WTC11 (cell line): ENCODE measurements at regions of chr7 and their contacts with region 1.

Region 1: DNA sequence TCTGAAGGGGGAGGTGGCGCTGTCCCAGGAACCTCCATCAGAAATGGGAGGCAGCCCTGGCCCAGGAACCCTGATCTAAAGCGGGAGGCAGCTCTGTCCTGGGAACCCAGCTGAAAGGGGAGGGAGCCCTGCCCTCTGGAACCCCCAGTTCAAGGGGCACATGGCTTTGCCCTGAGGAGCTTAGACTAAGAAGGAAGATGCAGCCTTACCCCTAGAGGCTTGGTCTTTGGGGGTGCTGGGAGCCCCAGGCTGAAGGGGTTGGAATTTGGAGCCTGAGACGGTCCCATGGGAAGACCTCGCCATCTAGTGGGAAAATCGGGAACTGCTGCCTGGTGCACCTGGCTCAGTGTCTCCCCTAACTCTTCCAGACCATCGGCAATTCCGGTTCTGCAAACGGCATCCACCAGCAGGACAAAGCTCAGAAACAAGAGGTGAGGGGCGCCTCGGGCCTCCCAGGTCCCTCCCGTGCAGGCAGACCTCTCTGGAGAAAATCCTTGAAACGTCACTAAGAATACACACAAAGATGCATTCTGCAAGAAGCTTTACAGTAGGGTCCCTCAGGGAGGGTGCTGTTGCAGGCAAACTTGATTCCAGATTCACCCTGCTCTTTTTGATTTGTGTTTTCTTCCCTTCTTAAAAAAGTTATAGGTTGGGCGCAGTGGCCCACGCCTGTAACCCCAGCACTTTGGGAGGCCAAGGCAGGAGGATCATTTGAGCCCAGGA is 52.4 kb upstream of the GTF2IRD1 start:
- DNase-seq: peak; percentile 93
- ATAC-seq: peak; percentile 63
- H3K4me3 Mint-ChIP-seq: no peak overlapping the region
- H3K27ac Mint-ChIP-seq: no peak overlapping the region
- H3K4me1 Mint-ChIP-seq: peaks cover 5% of the 10 kb centered on the region; the same call in 1 of the 2 replicates
- H3K27me3 Mint-ChIP-seq: no peaks in the 10 kb centered on the region; the same call in 1 of the 2 replicates
- CTCF ChIP-seq: peak; percentile 97

Region 2: DNA sequence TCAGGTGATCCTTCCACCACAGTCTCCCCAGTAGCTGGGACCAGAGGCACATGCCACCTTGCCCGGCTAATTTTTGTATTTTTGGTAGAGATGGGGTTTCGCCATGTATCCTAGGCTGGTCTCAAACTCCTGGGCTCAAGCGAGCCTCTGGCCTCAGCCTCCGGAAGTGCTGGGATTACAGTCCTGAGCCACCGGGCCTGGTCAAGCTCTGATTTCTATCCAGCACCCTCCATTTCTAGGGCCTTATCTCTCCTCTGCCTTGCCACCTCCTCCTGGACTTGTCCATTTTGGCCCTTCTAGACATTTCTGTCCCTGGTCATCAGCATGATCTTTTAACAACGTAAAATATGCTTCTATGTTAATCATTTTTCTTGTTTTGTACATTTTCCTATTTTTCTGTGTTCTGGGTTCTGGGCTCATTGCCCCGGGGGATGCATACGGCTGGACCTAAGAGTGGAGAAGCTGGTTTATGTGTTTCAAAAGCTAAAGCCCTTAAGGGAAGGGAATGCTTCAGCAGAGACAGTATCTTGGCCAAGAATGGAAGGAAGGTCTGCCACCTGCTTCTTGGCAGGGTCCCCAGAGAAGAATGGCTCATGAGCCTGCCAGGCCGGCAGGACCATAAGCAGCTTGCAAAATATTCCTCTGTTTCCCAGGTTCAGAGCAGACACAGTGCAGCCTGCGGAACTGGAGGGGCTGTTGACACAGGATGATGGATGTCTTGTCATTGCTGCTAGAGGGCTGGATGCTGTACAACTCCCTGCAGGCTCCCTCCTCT is 655.1 kb before region 1 on chr7:
- CTCF ChIA-PET with region 1: no interaction called
- POLR2A ChIA-PET with region 1: no interaction called
- DNase-seq: no peak
- ATAC-seq: no peak
- H3K4me3 Mint-ChIP-seq: no peak overlapping the region
- H3K27ac Mint-ChIP-seq: peak overlapping the region; percentile 42; the same call in 1 of the 2 replicates
- H3K4me1 Mint-ChIP-seq: peaks cover 33% of the 10 kb centered on the region
- H3K27me3 Mint-ChIP-seq: peaks cover 16% of the 10 kb centered on the region
- CTCF ChIP-seq: no peak

Region 3: DNA sequence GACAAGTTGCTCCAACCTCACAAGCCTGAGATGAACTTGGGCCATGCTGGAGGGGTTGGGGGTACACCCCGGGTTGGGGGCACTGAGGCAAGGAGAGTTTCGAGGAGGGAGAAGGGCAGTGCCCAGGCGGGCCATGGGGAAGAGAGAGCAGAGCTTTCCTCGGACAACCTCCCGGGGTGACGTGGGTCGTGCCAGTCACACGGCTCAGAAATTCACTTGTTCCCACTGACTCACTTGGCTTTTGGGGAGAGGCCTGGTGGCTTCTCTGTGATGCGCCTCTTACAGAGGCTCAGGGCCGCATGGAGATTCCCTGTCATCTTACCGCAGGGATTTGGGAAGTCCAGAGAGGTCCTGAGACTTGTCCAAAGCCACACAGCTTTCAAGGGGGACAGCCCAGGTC is 188.6 kb before region 1 on chr7:
- CTCF ChIA-PET with region 1: interaction called, 275 read pairs
- POLR2A ChIA-PET with region 1: no interaction called
- DNase-seq: no peak
- ATAC-seq: no peak
- H3K4me3 Mint-ChIP-seq: no peak overlapping the region
- H3K27ac Mint-ChIP-seq: no peak overlapping the region
- H3K4me1 Mint-ChIP-seq: no peaks in the 10 kb centered on the region
- H3K27me3 Mint-ChIP-seq: no peaks in the 10 kb centered on the region; the same call in 1 of the 2 replicates
- CTCF ChIP-seq: no peak

Region 4: GRCh38 chr7:74226633-74227032 is 174.7 kb before region 1 on chr7:
- CTCF ChIA-PET with region 1: interaction called, 31 read pairs
- POLR2A ChIA-PET with region 1: interaction called, 6 read pairs
- DNase-seq: no peak
- ATAC-seq: no peak
- H3K4me3 Mint-ChIP-seq: no peak overlapping the region
- H3K27ac Mint-ChIP-seq: 0 out of 2 replicates have a peak overlapping the region, but pooled peaks have one; percentile 7
- H3K4me1 Mint-ChIP-seq: no peaks in the 10 kb centered on the region
- H3K27me3 Mint-ChIP-seq: no peaks in the 10 kb centered on the region; the same call in 1 of the 2 replicates
- CTCF ChIP-seq: no peak

Region 5: GRCh38 chr7:74281030-74281429 is 120.3 kb before region 1 on chr7:
- CTCF ChIA-PET with region 1: interaction called, 33 read pairs
- POLR2A ChIA-PET with region 1: no interaction called
- DNase-seq: no peak
- ATAC-seq: no peak
- H3K4me3 Mint-ChIP-seq: no peak overlapping the region
- H3K27ac Mint-ChIP-seq: peak overlapping the region; percentile 66; the same call in 1 of the 2 replicates
- H3K4me1 Mint-ChIP-seq: peaks cover 45% of the 10 kb centered on the region
- H3K27me3 Mint-ChIP-seq: no peaks in the 10 kb centered on the region
- CTCF ChIP-seq: no peak

Region 6: DNA sequence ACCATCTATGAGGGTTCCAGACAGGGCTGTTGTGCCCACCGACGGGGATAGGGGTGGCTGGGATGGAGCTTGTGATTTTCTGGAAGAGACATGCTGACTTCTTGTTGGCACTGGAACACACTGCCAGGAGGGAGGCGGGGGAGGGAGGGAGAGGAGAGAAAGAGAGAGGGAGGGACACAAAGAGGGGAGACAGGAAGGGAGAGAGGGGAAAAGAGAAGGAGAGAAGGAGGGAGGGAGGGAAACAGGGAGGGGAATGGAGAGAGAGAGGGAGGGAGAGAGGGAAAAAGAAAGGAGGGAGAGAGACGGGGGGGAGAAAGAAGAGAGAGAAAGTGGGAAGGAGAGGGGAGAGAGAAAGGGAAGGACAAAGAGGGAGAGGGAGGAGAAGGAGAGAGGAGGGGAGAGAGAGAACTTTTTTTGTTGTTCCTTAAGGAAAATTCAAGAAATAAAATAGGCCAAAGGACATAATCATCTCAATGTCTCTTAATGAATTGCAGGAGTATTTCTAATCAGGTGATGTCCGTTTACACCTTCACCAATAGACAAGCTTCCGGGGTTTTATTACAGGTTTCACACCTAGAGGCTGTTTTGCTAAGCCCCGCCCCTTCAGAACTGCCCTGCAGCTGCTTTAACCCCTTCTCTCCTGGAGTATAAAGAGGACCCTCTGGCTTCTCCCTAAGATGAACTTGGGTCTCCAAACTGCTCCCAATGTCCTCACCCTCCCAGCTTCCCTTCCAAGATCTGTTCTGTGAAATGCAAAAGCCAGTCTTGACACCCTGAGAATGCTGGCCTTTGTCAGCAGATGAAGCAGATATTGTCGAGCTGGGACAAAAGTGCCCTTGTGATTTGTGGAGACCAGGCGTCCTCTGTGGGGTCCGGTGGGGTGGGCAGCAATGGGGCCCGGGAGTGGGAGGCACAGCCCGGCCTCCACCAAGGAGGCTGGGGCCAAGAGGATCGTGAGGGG is 29.6 kb before region 1 on chr7:
- CTCF ChIA-PET with region 1: interaction called, 14 read pairs
- POLR2A ChIA-PET with region 1: no interaction called
- DNase-seq: peak; percentile 61
- ATAC-seq: peak; percentile 62
- H3K4me3 Mint-ChIP-seq: peak overlapping the region; percentile 69
- H3K27ac Mint-ChIP-seq: peak overlapping the region; percentile 91
- H3K4me1 Mint-ChIP-seq: peaks cover 27% of the 10 kb centered on the region
- H3K27me3 Mint-ChIP-seq: no peaks in the 10 kb centered on the region
- CTCF ChIP-seq: no peak

Region 7: DNA sequence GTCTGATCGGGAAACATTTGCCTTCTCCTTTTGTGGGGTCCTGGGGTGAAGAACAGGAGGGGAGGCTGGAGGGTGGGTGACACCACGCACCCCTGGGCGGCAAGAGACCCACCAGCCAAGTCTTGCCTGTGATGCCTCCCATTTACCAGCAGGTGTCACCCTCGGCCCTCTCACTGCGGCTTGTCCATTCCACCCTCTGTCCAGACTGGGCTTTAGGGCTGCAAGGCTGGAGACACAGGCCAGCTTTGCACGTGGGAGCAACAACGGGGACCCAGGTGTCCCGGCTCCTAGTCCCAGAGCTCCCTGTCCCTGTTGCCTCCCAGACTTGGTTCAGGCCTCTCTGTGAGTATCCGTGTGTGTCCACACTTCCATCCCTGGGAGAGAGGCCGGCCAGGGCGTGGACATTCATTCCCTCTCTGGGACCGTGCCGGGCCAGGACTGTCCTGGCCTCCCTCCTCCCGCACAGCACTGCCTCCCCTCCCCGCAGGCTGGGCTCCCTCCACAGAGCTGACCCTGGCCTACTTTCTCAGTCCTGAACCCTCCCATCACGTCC is 16.2 kb after region 1 on chr7:
- CTCF ChIA-PET with region 1: interaction called, 16 read pairs
- POLR2A ChIA-PET with region 1: interaction called, 3 read pairs
- DNase-seq: peak; percentile 80
- ATAC-seq: peak; percentile 97
- H3K4me3 Mint-ChIP-seq: no peak overlapping the region
- H3K27ac Mint-ChIP-seq: no peak overlapping the region
- H3K4me1 Mint-ChIP-seq: no peaks in the 10 kb centered on the region
- H3K27me3 Mint-ChIP-seq: no peaks in the 10 kb centered on the region; the same call in 1 of the 2 replicates
- CTCF ChIP-seq: peak; percentile 96

Region 8: DNA sequence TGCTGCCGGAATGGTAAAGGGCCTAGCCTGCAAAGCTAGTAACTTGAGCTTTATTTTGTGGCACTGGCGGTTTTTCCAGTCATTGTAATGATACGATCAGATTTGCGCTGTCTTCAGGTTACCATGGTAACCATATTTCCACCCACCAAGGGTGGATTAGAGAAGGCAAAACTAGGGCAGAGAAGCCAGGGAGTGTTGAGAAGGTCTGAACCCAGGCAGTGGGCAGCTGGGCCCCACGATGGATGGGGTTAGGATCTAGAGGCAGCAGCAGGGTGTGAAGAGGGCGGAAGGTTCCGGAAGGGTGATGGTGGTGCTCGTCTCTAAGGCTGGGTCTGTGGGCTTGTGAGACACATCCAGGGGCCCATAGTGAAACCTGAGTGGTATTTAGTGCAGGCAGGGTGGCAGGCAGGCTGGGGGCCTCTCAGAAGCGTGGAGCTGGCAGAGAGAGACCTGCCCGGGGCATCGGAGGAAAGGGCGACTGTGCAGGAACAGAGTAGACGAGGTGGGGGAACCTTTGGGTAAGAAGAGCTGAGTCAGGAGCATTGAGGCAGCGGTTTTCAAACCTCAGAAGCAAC is 168.3 kb after region 1 on chr7:
- CTCF ChIA-PET with region 1: interaction called, 37 read pairs
- POLR2A ChIA-PET with region 1: no interaction called
- DNase-seq: no peak
- ATAC-seq: no peak
- H3K4me3 Mint-ChIP-seq: no peak overlapping the region
- H3K27ac Mint-ChIP-seq: peak overlapping the region; percentile 12
- H3K4me1 Mint-ChIP-seq: peaks cover 6% of the 10 kb centered on the region
- H3K27me3 Mint-ChIP-seq: no peaks in the 10 kb centered on the region
- CTCF ChIP-seq: no peak